ENCODE measurements at regions of chr6 and their contacts with region 1.

Region 1: GRCh38 chr6:90425161-90425641 is 128.6 kb upstream of the BACH2 start:
- DNase-seq: no peak
- H3K4me3 Mint-ChIP-seq: peak overlapping the region; percentile 68
- H3K27ac Mint-ChIP-seq: peak overlapping the region; percentile 87
- H3K4me1 Mint-ChIP-seq: peaks cover 26% of the 10 kb centered on the region
- H3K27me3 Mint-ChIP-seq: no peaks in the 10 kb centered on the region

Region 2: GRCh38 chr6:90319044-90319443 is 106.2 kb before region 1 on chr6:
- intact Hi-C with region 1: loop called (anchors 1 kb)
- DNase-seq: no peak
- H3K4me3 Mint-ChIP-seq: no peak overlapping the region
- H3K27ac Mint-ChIP-seq: peak overlapping the region; percentile 63
- H3K4me1 Mint-ChIP-seq: peaks cover 19% of the 10 kb centered on the region
- H3K27me3 Mint-ChIP-seq: peaks cover 4% of the 10 kb centered on the region

Region 3: DNA sequence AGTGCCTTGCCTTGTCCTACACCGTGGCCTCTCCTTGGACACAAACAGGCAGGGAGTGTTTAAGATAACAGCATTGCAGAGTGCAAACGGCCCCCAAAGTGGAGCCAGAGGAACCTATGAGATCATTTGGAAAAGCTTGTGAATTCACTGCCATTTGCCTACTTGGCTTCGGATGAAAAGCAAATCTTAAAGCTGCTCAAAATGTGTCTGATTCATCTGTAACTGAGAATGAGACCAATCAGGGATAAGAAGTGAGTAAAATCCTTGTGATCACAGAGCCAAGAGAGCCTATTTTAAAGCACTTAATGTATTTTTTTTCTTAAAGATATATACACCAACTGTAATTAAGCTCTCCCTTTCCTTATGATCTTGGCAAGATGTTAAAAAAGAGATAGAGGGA is 62.9 kb before region 1 on chr6:
- intact Hi-C with region 1: no loop called
- DNase-seq: no peak
- H3K4me3 Mint-ChIP-seq: no peak overlapping the region
- H3K27ac Mint-ChIP-seq: no peak overlapping the region
- H3K4me1 Mint-ChIP-seq: no peaks in the 10 kb centered on the region
- H3K27me3 Mint-ChIP-seq: peaks cover 2% of the 10 kb centered on the region

Region 4: DNA sequence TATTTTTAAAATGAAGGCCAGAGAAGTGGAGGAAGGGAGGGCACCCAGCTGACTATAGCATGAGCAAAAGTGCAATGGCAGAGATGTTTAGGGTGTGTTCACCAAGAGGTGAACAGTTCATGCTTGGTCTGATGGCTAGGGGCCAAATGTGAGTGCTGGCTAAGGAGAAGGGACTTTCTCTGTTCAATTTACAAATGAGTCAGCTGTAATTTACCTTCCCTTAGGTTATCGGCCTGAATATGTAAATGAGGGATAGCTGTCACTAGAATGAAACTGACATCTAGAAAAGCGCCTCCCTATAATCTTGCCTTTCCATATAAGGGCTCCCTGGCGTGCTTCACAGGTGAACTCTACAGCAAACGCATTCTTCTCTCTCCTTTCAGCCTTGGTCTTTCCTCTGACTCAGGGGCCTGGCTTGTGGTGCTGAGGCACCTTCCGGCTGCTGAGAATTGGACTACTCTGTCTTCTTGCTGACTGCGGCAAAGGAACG is 13.9 kb before region 1 on chr6:
- intact Hi-C with region 1: loop called (anchors 1 kb)
- DNase-seq: peak; percentile 59
- H3K4me3 Mint-ChIP-seq: no peak overlapping the region
- H3K27ac Mint-ChIP-seq: peak overlapping the region; percentile 75
- H3K4me1 Mint-ChIP-seq: peaks cover 81% of the 10 kb centered on the region
- H3K27me3 Mint-ChIP-seq: no peaks in the 10 kb centered on the region

Region 5: DNA sequence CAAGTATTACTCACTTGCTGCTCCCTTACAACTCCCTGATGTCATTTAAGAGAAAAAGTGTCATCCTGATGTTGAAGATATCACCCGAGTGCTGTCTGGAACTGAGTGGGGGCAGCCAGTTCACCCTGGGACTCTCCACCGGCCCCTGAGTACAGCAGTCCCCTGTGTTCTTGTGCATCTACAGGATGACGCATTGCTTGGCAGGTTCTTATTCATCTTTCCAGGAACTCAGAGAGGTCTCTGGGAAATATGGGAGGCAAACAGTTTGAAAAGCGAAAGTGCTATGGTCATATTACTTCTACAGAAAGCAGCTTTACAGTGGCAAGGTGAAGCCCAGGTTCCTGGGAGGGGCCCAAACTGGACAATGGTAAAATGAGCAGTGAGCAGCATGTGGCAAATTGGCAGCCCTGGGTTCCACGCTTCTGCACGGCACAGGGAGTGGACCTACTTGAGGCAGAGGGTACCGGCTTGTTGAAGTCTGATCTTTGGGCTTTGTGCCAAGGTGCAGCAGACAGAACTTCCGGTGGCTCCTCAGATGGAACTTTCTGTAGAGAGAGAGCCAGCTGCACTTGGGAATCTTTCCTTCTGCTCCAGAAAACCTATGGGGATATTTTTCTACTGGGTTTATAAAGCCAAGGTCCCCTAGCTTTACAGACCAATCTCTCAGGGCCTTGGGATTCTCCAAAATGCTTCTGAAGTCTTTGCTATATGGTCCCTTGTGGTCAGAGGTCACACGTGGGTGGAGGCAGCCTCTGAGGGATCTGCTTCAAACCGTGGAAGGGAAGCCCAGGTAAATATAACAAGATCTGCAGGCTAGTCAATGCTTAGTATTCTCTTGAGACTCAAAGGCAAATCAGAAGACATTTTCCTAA is 33.4 kb after region 1 on chr6:
- intact Hi-C with region 1: loop called (anchors 1 kb)
- DNase-seq: peak; percentile 66
- H3K4me3 Mint-ChIP-seq: peak overlapping the region; percentile 47
- H3K27ac Mint-ChIP-seq: peak overlapping the region; percentile 93
- H3K4me1 Mint-ChIP-seq: peaks cover 65% of the 10 kb centered on the region
- H3K27me3 Mint-ChIP-seq: no peaks in the 10 kb centered on the region

Region 6: GRCh38 chr6:90466154-90466940 is 41.1 kb after region 1 on chr6:
- intact Hi-C with region 1: loop called (anchors 1 kb)
- DNase-seq: no peak
- H3K4me3 Mint-ChIP-seq: peak overlapping the region; percentile 61
- H3K27ac Mint-ChIP-seq: peak overlapping the region; percentile 92
- H3K4me1 Mint-ChIP-seq: peaks cover 93% of the 10 kb centered on the region
- H3K27me3 Mint-ChIP-seq: no peaks in the 10 kb centered on the region

Region 7: DNA sequence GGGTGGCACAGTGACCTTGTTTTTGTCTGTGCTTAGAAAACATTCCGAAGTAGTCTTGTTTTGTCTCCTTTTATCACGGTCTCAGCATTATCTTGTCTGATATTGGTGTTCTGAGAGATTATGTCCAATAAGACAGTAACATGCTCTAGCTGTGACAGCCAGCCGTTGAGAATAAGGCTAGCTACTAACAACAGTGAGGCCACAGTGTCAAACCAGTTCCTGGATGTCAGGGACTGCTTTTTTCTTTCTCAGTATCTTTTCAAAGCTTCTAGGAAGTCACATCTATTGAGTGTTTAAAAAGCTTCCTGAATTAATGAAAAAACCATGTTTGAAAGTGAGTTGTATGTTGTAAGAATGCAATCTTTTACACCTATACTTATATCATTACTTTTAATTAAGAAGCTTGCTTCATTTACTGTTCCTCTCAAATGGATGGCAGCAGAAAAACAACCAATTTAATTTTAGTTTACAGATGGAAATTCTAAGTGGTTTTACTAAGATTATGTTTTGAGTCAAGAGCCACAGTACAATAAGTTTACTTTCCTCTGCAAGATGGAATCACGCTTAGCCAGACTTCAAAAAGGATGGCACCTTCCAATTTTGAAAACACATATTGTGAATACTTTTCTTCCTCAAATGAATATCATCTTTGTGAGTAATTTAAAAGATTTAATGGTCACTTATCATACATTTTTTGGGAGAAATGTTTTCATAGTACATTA is 108.6 kb after region 1 on chr6:
- intact Hi-C with region 1: loop called (anchors 5 kb)
- DNase-seq: no peak
- H3K4me3 Mint-ChIP-seq: peak overlapping the region; percentile 40
- H3K27ac Mint-ChIP-seq: peak overlapping the region; percentile 87
- H3K4me1 Mint-ChIP-seq: peaks cover 52% of the 10 kb centered on the region
- H3K27me3 Mint-ChIP-seq: no peaks in the 10 kb centered on the region

Region 8: GRCh38 chr6:90610751-90611542 is 185.7 kb after region 1 on chr6:
- intact Hi-C with region 1: no loop called
- DNase-seq: peak; percentile 14
- H3K4me3 Mint-ChIP-seq: peak overlapping the region; percentile 84
- H3K27ac Mint-ChIP-seq: peak overlapping the region; percentile 47
- H3K4me1 Mint-ChIP-seq: peaks cover 13% of the 10 kb centered on the region
- H3K27me3 Mint-ChIP-seq: peaks cover 64% of the 10 kb centered on the region